Left ventricle myocardium superior (tissue), 1 donor: ENCODE measurements at regions of chr19 and their contacts with region 1.

Region 1: DNA sequence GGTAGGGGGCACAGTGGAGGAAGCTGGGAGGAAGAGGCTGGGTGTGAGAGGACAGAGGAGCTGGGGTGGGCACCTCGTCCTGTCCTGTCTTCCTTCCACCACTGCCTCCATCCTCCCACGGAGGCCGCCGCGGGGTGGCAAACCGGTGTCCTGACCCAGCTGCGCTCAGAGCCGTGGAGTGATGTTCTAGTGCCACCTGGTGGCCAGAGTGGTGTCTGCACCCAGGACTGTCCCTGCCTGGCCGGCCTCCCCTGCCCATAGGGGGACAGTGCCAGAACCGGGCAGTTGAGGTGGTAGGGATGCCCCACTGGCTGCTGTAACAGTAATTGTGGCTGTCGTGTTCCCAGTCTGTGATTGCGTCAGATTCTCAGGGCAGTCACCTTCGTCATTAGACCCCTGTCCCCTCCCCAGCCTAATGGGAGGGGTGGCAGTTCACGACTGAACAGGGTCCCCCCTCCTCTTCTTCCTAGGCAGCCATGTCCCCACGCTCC is 11.1 kb upstream of the ARRDC2 start:
- DNase-seq: peak; percentile 90
- ATAC-seq: peak; percentile 78

Region 2: GRCh38 chr19:17938092-17938845 is 58.6 kb before region 1 on chr19:
- intact Hi-C with region 1: loop called (anchors 5 kb)
- DNase-seq: peak; percentile 87
- ATAC-seq: peak; percentile 86